Psoas muscle (tissue), 8 donors: ENCODE measurements at regions of chr2 and their contacts with region 1.

Region 1: GRCh38 chr2:24421668-24422067 is 61.3 kb upstream of the ITSN2 start:
- DNase-seq: peak; percentile 63 to 66
- ATAC-seq: peak; percentile 66 to 95 (median 88)
- H3K4me3 ChIP-seq: no peak overlapping the region
- H3K27ac ChIP-seq: no peak overlapping the region
- H3K4me1 ChIP-seq: no peaks in the 10 kb centered on the region
- H3K27me3 ChIP-seq: no peaks in the 10 kb centered on the region
- CTCF ChIP-seq: peak; percentile 54

Region 2: GRCh38 chr2:24620936-24621335 is 199.3 kb after region 1 on chr2:
- intact Hi-C with region 1: no loop called
- DNase-seq: no peak
- ATAC-seq: peak in 2 of 4 donors; percentile 38 to 51
- H3K4me3 ChIP-seq: no peak overlapping the region
- H3K27ac ChIP-seq: no peak overlapping the region
- H3K4me1 ChIP-seq: peaks cover 74% of the 10 kb centered on the region
- H3K27me3 ChIP-seq: no peaks in the 10 kb centered on the region
- CTCF ChIP-seq: no peak

Region 3: DNA sequence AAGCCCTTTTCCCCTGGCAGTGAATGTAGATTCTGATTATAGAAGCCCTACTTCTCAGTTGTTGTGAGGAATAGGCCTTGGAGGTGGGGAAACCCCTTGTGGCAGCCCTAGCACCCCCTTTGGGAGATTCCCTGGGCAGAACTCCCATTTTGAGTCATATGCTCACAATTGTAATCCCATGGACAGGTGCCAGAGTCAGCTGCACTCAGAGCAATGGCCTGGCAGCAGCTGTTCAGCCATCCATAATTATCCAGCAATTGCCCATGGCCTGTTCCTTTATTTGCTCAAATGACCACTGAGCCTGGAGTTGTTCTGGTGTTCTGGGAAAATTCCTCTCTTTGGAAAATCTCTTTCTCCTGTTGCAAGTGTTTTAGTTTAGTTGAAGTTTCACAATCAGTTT is 299.8 kb after region 1 on chr2:
- intact Hi-C with region 1: loop called in 1 of 2 experiments (anchors 10 kb)
- DNase-seq: peak; percentile 63 to 89
- ATAC-seq: peak; percentile 94 to 97 (median 95)
- H3K4me3 ChIP-seq: peak overlapping the region; percentile 13
- H3K27ac ChIP-seq: peak overlapping the region; percentile 81
- H3K4me1 ChIP-seq: peaks cover 40% of the 10 kb centered on the region
- H3K27me3 ChIP-seq: no peaks in the 10 kb centered on the region
- CTCF ChIP-seq: no peak